Right cardiac atrium (tissue), 5 donors: ENCODE measurements at regions of chr12 and their contacts with region 1.

Region 1: DNA sequence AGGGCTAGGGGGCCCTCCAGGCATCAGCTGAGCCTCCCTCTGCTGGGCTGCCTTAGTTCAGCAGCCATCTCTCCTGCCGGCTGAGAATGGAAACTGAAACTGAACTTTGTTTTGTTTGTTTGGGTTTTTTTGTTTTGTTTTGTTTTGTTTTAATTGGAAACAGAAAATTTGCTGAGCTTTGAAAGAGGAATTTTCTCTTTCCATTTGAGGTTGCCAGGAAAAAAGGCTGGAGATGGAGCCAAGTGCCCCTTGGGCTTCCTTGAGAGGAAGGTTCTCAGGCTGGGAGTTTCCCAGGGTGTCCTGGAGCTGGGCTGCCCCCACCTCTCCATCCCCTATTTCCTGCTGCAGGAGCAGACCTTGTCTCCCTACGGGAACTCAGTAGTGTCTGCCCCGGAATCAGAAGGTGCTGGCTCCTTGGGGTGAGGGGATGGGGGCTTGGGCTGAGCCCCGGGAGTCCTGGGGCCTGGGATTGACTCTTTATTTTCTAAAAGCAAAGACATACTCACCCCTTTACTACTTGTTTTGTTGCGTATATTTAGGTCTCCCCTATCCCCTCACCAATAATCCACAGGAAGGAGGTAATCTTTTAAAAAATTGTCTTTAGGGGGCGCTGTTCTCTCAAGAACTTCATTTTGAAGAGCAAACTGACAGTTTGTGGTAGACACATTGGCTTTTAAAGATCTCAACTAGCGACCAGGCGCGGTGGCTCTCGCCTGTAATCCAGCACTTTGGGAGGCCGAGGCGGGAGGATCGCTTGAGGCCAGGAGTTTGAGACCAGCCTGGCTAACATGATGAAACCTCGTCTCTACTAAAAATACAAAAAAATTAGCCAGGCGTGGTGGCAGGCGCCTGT is 21.3 kb upstream of the OASL start:
- DNase-seq: peak; percentile 48 to 68 (median 64)
- ATAC-seq: peak; percentile 87 to 96
- H3K4me3 ChIP-seq: peak overlapping the region; percentile 40
- H3K27ac ChIP-seq: peak overlapping the region; percentile 89
- H3K4me1 ChIP-seq: no peaks in the 10 kb centered on the region
- H3K27me3 ChIP-seq: no peaks in the 10 kb centered on the region

Region 2: GRCh38 chr12:121095544-121096198 is 35.3 kb after region 1 on chr12:
- intact Hi-C with region 1: loop called in 2 of 4 experiments (anchors 5 kb)
- DNase-seq: peak; percentile 71 to 88 (median 85)
- ATAC-seq: peak; percentile 90 to 95
- H3K4me3 ChIP-seq: peak overlapping the region; percentile 19
- H3K27ac ChIP-seq: no peak overlapping the region
- H3K4me1 ChIP-seq: peaks cover 6% of the 10 kb centered on the region
- H3K27me3 ChIP-seq: no peaks in the 10 kb centered on the region